ENCODE measurements at regions of chr20 and their contacts with region 1.

Region 1: DNA sequence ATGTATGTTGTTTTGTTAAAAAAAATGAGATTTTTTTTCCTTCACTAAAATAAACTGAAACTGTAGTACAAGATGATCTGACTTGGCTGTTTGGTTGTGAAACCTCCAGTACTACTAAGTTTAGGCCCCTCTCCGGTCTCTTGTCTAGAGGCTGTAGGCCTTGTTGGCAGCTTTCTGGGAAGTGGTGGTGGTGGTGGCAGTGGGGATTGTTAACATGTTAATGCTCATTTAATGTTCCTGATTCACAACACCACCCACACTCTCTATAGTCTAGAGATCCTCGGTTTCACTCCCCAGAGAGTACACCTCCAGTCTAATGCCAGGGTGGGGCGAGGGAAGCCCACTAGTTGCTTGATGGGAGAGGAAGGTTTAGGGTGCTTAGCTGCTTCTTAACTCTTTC is 24.1 kb downstream of the STK4 start:
- DNase-seq: no peak
- H3K4me3 Mint-ChIP-seq: peak overlapping the region; percentile 82
- H3K27ac Mint-ChIP-seq: peak overlapping the region; percentile 94
- H3K4me1 Mint-ChIP-seq: peaks cover 71% of the 10 kb centered on the region
- H3K27me3 Mint-ChIP-seq: no peaks in the 10 kb centered on the region

Region 2: GRCh38 chr20:44979090-44979621 is 11.3 kb before region 1 on chr20:
- intact Hi-C with region 1: loop called (anchors 1 kb)
- DNase-seq: peak; percentile 67
- H3K4me3 Mint-ChIP-seq: peak overlapping the region; percentile 73
- H3K27ac Mint-ChIP-seq: peak overlapping the region; percentile 95
- H3K4me1 Mint-ChIP-seq: peaks cover 72% of the 10 kb centered on the region
- H3K27me3 Mint-ChIP-seq: no peaks in the 10 kb centered on the region

Measured in activated T-helper 1 cell treated with anti-CD3 and anti-CD28 coated beads, Interleukin-12 subunit alpha, Interleukin-12 subunit beta, Interleukin-2, Interleukin-4 antibody, amounts not matched to agents 30 ng/mL and 10 ng/mL and 1 ng/mL, durations not matched to agents 14 hours and 24 hours and 36 hours (primary cell).